ENCODE measurements at regions of chr5 and their contacts with region 1.

Region 1: GRCh38 chr5:126776497-126777256 is at the start of gene LMNB1:
- DNase-seq: peak; percentile 98
- H3K4me3 Mint-ChIP-seq: peak within 1 kb of the TSS; percentile 100
- H3K27ac Mint-ChIP-seq: peak within 1 kb of the TSS; percentile 95
- H3K4me1 Mint-ChIP-seq: peaks cover 6% of the 10 kb centered on the region
- H3K27me3 Mint-ChIP-seq: no peaks in the 10 kb centered on the region
- CTCF ChIP-seq: no peak
- total RNA-seq, gene LMNB1: 19.6 and 31.6 TPM in 2 replicates

Region 2: DNA sequence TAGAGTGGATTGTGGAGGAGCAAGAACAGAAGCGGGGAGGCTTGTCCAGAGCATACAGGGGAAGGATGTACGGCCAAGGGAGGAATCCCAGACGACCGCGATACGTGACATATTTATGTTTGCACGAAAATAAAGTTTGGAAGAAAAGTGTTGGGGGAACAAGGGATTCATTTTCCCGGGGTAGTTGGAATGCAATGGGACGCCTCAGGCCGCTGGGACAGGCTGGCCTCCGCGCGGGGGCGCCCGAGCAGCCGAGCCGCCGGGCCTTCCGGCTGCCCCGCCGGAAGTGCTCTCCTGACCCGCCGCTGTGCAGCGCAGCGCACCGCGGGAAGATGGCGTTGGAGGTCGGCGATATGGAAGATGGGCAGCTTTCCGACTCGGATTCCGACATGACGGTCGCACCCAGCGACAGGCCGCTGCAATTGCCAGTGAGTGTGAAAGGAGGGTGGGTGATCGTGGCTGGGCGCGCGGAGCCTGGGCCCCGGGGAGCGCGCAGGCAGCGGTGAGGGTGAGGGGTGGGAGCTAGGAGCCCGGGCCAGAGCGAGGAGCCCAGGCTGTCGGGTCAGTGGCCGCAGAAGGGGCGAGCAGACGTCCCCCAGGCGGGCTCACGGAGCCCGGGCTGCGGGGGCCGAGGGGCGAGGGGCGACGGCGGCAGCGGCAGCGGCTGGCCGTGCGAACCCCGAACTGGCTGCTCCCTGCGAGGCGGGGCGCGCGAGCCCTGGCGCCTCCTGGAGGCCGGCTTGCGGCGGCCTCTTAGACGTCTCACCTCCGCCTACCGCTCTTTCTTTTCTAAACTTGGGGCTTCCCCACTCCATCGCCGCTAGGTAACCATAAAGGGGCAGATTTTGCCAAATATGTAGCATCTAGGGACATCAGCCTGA is 175.8 kb before region 1 on chr5 and contains the start of gene PHAX:
- CTCF ChIA-PET with region 1: interaction called, 15 read pairs
- POLR2A ChIA-PET with region 1: interaction called, 11 read pairs
- intact Hi-C with region 1: loop called (anchors 5 kb)
- DNase-seq: peak; percentile 86
- H3K4me3 Mint-ChIP-seq: peak within 1 kb of the TSS; percentile 86
- H3K27ac Mint-ChIP-seq: peak within 1 kb of the TSS; percentile 83
- H3K4me1 Mint-ChIP-seq: peaks cover 31% of the 10 kb centered on the region
- H3K27me3 Mint-ChIP-seq: no peaks in the 10 kb centered on the region
- CTCF ChIP-seq: peak; percentile 71
- total RNA-seq, gene PHAX: 57.4 and 73.2 TPM in 2 replicates

Region 3: DNA sequence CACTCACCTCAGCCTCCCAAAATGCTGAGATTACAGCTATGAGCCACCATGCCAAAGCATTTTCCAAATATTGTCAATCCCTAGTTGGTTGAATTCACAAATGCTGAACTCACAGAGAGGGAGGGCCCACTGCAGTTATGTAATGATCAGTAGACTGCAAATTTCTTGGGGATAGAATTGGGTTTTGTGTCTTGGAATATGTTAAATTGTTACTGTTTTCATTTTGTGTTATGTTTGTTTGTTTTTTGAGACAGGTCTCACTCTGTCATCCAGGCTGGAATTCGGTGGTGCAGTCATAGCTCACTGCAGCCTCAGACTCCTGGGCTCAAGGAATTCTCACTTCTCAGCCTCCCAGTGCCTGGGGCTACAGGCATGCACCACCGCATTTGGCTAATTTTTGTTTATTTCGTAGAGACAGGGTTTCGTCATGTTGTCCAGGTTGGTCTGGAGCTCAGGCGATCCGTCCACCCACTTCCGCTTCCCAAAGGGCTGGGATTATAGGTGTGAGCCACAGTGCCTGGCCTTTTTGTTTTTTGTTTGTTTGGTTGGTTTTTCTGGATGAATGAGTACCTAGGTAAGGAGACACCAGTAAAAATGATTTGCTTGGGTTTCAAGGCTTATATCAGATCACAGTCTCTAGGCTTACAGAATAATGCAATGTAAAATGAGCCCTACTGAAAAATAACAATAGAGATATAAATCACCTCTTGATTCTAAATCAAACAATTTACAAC is 31.3 kb before region 1 on chr5:
- CTCF ChIA-PET with region 1: interaction called, 3 read pairs
- POLR2A ChIA-PET with region 1: no interaction called
- intact Hi-C with region 1: loop called (anchors 1 kb)
- DNase-seq: peak; percentile 71
- H3K4me3 Mint-ChIP-seq: no peak overlapping the region
- H3K27ac Mint-ChIP-seq: no peak overlapping the region
- H3K4me1 Mint-ChIP-seq: peaks cover 12% of the 10 kb centered on the region
- H3K27me3 Mint-ChIP-seq: no peaks in the 10 kb centered on the region
- CTCF ChIP-seq: no peak

Region 4: GRCh38 chr5:126794157-126794828 is 17.6 kb after region 1 on chr5:
- CTCF ChIA-PET with region 1: interaction called, 125 read pairs
- POLR2A ChIA-PET with region 1: interaction called, 34 read pairs
- intact Hi-C with region 1: no loop called
- DNase-seq: no peak
- H3K4me3 Mint-ChIP-seq: no peak overlapping the region
- H3K27ac Mint-ChIP-seq: peak overlapping the region; percentile 68
- H3K4me1 Mint-ChIP-seq: peaks cover 18% of the 10 kb centered on the region
- H3K27me3 Mint-ChIP-seq: no peaks in the 10 kb centered on the region
- CTCF ChIP-seq: no peak

Region 5: GRCh38 chr5:126808521-126808988 is 31.9 kb after region 1 on chr5:
- CTCF ChIA-PET with region 1: interaction called, 154 read pairs
- POLR2A ChIA-PET with region 1: interaction called, 99 read pairs
- intact Hi-C with region 1: loop called (anchors 2 kb)
- DNase-seq: peak; percentile 61
- H3K4me3 Mint-ChIP-seq: no peak overlapping the region
- H3K27ac Mint-ChIP-seq: peak overlapping the region; percentile 61
- H3K4me1 Mint-ChIP-seq: peaks cover 17% of the 10 kb centered on the region
- H3K27me3 Mint-ChIP-seq: no peaks in the 10 kb centered on the region
- CTCF ChIP-seq: peak; percentile 47